Activated B cell treated with CpG ODN at 0.5 μM for 24 hours (primary cell): ENCODE measurements at regions of chr6 and their contacts with region 1.

Region 1: GRCh38 chr6:52551401-52552277 is 25.2 kb downstream of the TRAM2 start:
- DNase-seq: no peak
- ATAC-seq: no peak
- H3K4me3 Mint-ChIP-seq: peak overlapping the region; percentile 42
- H3K27ac Mint-ChIP-seq: peak overlapping the region; percentile 70
- H3K4me1 Mint-ChIP-seq: peaks cover 46% of the 10 kb centered on the region
- H3K27me3 Mint-ChIP-seq: no peaks in the 10 kb centered on the region
- CTCF ChIP-seq: no peak

Region 2: DNA sequence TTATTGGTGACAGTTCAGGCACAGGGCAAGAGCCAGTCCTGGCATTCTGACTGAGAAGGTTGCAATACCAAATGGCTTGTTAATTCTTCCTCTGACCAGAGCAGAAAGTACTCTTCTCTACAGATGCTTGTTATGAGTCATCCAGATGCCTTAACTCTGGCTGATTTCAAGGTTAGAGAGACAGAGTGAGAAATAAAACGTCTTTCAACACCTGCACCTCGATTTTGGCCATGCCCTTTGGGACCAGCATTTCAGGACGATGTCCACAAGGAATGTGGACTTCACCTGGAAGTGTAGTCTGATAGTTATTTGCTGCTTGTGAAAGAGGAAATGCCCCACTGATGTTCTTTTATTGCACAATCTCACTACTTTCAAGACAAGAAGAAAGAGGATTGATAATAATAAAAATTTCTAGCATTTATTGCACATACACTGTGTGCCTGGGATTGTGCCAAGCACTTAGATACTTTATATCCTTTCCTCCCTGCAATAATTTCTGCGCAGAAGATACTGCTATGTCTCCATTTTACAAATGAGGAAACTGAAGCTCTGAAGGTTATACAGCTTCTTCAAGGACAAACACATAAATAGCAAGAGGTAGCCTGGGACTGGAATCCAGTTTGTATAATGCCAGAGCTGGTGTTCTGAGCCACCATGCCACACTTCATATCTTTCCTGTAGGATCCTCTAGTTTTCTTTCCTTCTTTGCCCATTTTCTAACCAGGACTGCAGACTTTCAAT is 233.6 kb before region 1 on chr6:
- CTCF ChIA-PET with region 1: no interaction called
- POLR2A ChIA-PET with region 1: no interaction called
- intact Hi-C with region 1: no loop called
- DNase-seq: no peak
- ATAC-seq: peak; percentile 73
- H3K4me3 Mint-ChIP-seq: no peak overlapping the region
- H3K27ac Mint-ChIP-seq: peak overlapping the region; percentile 54
- H3K4me1 Mint-ChIP-seq: peaks cover 16% of the 10 kb centered on the region
- H3K27me3 Mint-ChIP-seq: no peaks in the 10 kb centered on the region
- CTCF ChIP-seq: no peak

Region 3: GRCh38 chr6:52497652-52498408 is 53.8 kb before region 1 on chr6:
- CTCF ChIA-PET with region 1: no interaction called
- POLR2A ChIA-PET with region 1: no interaction called
- intact Hi-C with region 1: loop called (anchors 1 kb)
- DNase-seq: peak; percentile 37
- ATAC-seq: peak; percentile 77
- H3K4me3 Mint-ChIP-seq: peak overlapping the region; percentile 60
- H3K27ac Mint-ChIP-seq: peak overlapping the region; percentile 98
- H3K4me1 Mint-ChIP-seq: peaks cover 66% of the 10 kb centered on the region
- H3K27me3 Mint-ChIP-seq: no peaks in the 10 kb centered on the region
- CTCF ChIP-seq: no peak

Region 4: DNA sequence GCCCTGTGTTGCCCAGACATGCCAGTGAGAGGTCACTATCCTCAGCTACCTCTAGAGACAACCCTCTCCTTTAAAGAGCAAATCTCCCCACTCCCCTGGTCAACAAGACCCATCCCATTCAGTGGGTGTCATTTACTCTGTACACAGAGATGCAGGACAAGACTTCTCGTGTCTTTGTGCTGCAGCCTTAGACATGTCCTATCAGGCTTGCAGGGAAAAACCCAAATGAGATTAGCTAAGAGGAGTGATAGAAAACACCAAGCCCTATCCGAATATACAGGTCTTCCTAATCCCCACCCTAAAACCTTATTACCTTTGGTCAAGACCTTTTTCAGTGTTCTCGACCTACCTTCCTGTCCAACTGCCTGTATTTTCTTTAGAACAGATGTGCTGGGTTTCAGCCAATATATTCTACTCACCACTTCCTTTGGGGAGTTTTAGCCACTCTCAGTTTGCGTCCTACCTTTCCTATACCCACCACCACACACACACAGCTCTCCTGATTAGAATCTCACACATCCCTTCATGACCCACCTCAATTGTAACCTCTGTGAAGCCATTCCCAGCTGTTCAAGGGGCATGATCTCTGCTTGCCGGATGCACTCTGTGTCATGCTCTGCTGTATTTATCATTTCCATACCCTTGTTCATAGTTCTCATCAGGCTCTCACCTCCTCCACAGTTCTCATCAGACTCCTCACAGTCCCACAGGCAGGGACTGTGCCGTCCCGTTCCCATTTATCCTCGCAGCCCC is 14.5 kb before region 1 on chr6:
- CTCF ChIA-PET with region 1: no interaction called
- POLR2A ChIA-PET with region 1: no interaction called
- intact Hi-C with region 1: loop called (anchors 1 kb)
- DNase-seq: no peak
- ATAC-seq: peak; percentile 34
- H3K4me3 Mint-ChIP-seq: no peak overlapping the region
- H3K27ac Mint-ChIP-seq: peak overlapping the region; percentile 30
- H3K4me1 Mint-ChIP-seq: peaks cover 21% of the 10 kb centered on the region
- H3K27me3 Mint-ChIP-seq: no peaks in the 10 kb centered on the region
- CTCF ChIP-seq: no peak

Region 5: DNA sequence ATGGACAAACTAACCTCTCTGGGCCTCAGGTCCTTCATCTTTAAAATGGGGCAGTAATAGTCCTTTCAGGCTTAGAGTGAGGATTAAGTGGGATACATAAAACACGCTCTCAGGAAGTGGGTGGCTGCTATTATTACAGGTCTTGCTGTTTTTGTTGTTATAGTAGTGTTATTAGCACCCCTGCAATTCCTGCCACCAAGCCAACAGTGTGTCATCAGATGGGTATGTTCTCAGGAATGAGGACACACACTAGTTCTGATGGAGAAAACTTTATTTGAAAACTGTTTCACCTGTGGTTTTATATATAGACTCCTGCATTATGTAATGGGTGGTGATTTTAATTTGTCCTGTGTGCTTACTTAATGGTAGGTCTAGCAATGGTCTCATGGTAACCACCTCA is 1374.9 kb after region 1 on chr6:
- CTCF ChIA-PET with region 1: no interaction called
- POLR2A ChIA-PET with region 1: no interaction called
- intact Hi-C with region 1: no loop called
- DNase-seq: no peak
- ATAC-seq: no peak
- H3K4me3 Mint-ChIP-seq: no peak overlapping the region
- H3K27ac Mint-ChIP-seq: no peak overlapping the region
- H3K4me1 Mint-ChIP-seq: no peaks in the 10 kb centered on the region
- H3K27me3 Mint-ChIP-seq: no peaks in the 10 kb centered on the region
- CTCF ChIP-seq: no peak